ENCODE measurements at regions of chr12 and their contacts with region 1.

Region 1: GRCh38 chr12:31702047-31702446 is 26.8 kb downstream of the AMN1 start:
- DNase-seq: peak; percentile 49
- H3K4me3 ChIP-seq: no peak overlapping the region
- H3K27ac ChIP-seq: no peak overlapping the region
- H3K4me1 ChIP-seq: no peaks in the 10 kb centered on the region
- H3K27me3 ChIP-seq: no peaks in the 10 kb centered on the region
- CTCF ChIP-seq: peak in 1 of 2 donors; percentile 19
- POLR2A ChIP-seq: no peak

Region 2: DNA sequence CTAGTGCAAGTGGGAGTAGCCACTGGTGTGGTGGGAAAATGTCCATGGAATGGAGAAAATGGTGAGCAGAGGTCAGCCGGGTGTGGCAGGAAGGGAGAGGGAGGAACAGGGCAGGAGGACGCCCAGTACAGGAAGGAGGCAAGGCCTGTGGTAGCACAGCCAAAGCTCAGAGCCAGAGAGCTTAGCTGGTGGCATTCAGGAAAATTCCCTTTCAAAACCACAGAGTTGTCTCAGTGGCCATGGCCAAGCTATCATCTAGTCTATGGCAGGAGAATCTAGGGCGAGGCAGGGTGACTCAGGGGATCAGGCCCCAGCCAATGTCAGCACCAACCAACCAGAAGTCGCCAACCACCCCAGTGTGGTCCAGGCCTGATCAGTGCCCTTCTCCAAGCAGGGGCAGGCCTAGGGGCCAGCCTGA is 696.1 kb before region 1 on chr12:
- CTCF ChIA-PET with region 1: no interaction called
- POLR2A ChIA-PET with region 1: no interaction called
- dilution Hi-C with region 1: no loop called
- intact Hi-C with region 1: no loop called
- DNase-seq: no peak
- H3K4me3 ChIP-seq: no peak overlapping the region
- H3K27ac ChIP-seq: no peak overlapping the region
- H3K4me1 ChIP-seq: peaks cover 2% of the 10 kb centered on the region
- H3K27me3 ChIP-seq: no peaks in the 10 kb centered on the region
- CTCF ChIP-seq: no peak
- POLR2A ChIP-seq: no peak

Region 3: DNA sequence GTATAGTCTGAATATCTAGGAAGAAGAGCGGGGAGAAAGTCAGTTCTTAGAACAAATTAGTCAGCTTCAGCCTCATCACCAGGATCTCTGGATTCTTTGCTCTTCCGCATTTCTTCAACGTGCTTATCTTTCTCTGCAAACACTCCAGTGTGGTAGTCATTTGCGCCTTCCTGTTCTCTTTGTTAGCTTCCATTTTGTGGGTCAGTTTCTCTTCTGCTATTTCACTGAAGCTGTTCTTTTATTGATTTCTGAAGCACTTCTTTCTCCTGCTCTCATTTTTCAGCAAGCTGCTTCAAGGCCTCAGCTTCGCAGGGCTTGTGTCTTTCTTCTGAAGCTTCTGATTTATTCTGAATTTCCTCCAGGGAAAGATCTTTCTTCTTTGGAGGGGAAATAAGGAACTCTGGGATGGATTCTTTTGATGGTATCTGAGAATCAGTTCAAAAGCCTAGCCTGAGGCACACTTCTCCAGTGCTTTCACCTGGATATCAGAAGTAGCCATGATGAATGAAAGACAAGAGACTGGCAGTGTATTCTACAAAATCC is 13.3 kb after region 1 on chr12:
- CTCF ChIA-PET with region 1: interaction called, 12 read pairs
- POLR2A ChIA-PET with region 1: no interaction called
- dilution Hi-C with region 1: no loop called
- intact Hi-C with region 1: no loop called
- DNase-seq: peak; percentile 89
- H3K4me3 ChIP-seq: no peak overlapping the region
- H3K27ac ChIP-seq: peak overlapping the region; percentile 85
- H3K4me1 ChIP-seq: peaks cover 10% of the 10 kb centered on the region
- H3K27me3 ChIP-seq: no peaks in the 10 kb centered on the region
- CTCF ChIP-seq: no peak
- POLR2A ChIP-seq: peak; percentile 56

Region 4: DNA sequence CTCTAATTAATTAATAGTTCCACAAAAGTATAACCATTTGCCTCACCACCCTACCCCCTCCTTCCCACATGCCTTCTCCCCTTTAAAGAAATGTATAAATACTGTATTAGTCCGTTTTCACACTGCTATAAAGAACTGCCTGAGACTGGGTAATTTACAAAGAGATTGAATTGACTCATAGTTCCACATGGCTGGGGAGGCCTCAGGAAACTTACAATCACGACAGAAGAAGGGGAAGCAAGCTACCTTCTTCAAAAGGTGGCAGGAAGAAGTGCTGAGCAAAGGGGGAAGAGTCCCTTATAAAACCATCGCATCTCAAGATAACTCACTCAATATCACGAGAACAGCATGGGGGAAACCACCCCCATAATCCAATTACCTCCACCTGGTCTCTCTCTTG is 249.0 kb after region 1 on chr12:
- CTCF ChIA-PET with region 1: no interaction called
- POLR2A ChIA-PET with region 1: no interaction called
- dilution Hi-C with region 1: no loop called
- intact Hi-C with region 1: no loop called
- DNase-seq: no peak
- H3K4me3 ChIP-seq: no peak overlapping the region
- H3K27ac ChIP-seq: no peak overlapping the region
- H3K4me1 ChIP-seq: no peaks in the 10 kb centered on the region
- H3K27me3 ChIP-seq: no peaks in the 10 kb centered on the region
- CTCF ChIP-seq: no peak
- POLR2A ChIP-seq: no peak